Right ventricle myocardium superior (tissue), 1 donor: ENCODE measurements at regions of chr1 and their contacts with region 1.

Region 1: DNA sequence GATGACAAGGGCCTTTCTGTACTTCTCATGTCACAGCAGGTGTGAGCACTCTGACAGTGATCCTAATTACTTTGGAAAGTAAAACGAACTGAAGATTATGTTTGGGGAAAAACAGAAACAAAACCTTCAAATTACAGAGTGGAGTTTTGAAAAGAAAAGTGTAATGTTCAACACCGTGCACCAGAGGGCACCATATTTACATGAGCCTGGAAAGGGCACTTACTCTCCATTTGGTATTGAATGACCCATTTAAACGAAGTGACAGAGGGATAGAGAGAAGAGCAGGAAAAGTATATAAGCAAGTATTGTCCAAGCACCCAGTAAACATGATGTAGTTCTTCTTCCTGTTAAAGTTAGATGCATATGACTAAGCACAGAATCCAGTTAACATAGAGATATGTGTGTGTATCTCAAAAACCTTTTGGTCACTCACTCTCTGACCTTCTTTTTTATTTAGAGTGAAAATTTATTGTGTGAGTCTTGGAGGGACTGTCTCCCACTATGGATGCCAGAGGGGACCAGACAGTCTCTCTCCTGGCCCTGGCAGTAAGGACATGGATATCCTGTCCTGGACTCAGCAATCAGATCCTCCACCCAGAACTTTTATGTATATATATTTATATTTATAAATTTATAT is 3.8 kb upstream of the RGSL1 start:
- DNase-seq: no peak
- ATAC-seq: peak; percentile 74

Region 2: DNA sequence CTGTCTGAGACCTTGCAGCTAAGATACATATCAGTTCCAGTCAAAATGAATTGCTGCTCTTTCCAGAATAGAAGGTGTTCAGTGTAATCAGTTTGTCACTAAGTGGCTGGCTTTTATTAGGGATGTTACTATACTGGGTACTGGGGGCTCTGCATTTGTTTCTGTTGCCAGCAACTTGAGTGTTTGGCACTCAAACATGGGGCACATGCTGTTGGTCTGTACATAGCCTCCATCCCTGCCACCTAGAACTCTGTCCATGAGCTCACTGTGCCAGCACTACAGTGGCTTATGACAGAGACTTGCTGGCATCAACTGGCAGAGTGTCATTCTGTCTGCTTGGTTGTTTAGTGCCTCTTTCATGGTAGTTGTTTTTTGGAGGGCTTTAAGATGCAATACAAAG is 48.9 kb after region 1 on chr1:
- intact Hi-C with region 1: no loop called
- DNase-seq: no peak
- ATAC-seq: peak; percentile 85

Region 3: GRCh38 chr1:182595641-182596240 is 149.6 kb after region 1 on chr1:
- intact Hi-C with region 1: loop called (anchors 10 kb)
- DNase-seq: peak; percentile 61
- ATAC-seq: peak; percentile 68